Activated B cell treated with CpG ODN at 0.5 μM for 24 hours (primary cell): ENCODE measurements at regions of chr16 and their contacts with region 1.

Region 1: GRCh38 chr16:2905431-2906387 is 6.0 kb upstream of the FLYWCH1 start:
- DNase-seq: peak; percentile 82
- ATAC-seq: peak; percentile 80
- H3K4me3 Mint-ChIP-seq: peak overlapping the region; percentile 91
- H3K27ac Mint-ChIP-seq: peak overlapping the region; percentile 41
- H3K4me1 Mint-ChIP-seq: peaks cover 27% of the 10 kb centered on the region
- H3K27me3 Mint-ChIP-seq: no peaks in the 10 kb centered on the region
- CTCF ChIP-seq: no peak

Region 2: DNA sequence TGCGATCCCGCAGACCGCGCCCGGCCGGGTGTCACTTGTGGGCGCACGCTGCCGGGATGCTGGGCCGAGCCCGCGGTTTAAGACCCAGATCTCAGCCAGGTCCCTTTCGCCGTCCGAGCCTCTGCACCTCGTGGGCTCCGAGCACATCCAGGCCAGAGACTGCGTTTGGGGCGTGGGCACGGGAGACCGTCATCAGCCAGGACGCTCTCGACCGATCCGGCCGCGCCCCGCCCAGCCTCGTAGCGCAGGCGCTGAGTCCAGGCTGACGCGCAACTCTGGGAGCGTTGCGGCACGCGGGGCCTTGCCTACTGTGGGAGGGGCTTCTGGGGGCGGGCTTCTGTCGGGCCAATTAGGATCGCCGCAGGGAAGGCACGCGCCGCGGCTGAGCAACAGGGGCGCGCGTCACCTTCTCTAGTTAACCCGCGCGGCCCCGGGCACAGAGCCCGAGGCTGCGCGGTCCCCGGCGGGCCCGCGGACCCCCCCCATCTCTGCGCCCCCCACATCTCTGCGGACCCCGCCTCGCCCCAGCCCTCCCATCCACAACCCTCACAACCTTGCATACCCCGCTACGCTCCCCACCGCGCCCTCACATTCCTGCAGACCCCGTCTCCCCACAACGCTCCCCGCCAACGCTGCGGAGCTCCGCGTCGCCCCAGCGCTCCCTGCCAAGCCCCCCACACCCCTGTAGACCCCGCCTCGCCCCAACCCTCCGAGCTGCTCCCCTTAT is 373.8 kb before region 1 on chr16:
- CTCF ChIA-PET with region 1: no interaction called
- POLR2A ChIA-PET with region 1: no interaction called
- intact Hi-C with region 1: loop called (anchors 10 kb)
- DNase-seq: peak; percentile 97
- ATAC-seq: peak; percentile 94
- H3K4me3 Mint-ChIP-seq: peak overlapping the region; percentile 97
- H3K27ac Mint-ChIP-seq: peak overlapping the region; percentile 96
- H3K4me1 Mint-ChIP-seq: peaks cover 23% of the 10 kb centered on the region
- H3K27me3 Mint-ChIP-seq: no peaks in the 10 kb centered on the region
- CTCF ChIP-seq: no peak

Region 3: GRCh38 chr16:2874912-2875362 is 30.8 kb before region 1 on chr16:
- CTCF ChIA-PET with region 1: interaction called, 15 read pairs
- POLR2A ChIA-PET with region 1: no interaction called
- intact Hi-C with region 1: loop called (anchors 1 kb)
- DNase-seq: peak; percentile 51
- ATAC-seq: peak; percentile 100
- H3K4me3 Mint-ChIP-seq: no peak overlapping the region
- H3K27ac Mint-ChIP-seq: no peak overlapping the region
- H3K4me1 Mint-ChIP-seq: no peaks in the 10 kb centered on the region
- H3K27me3 Mint-ChIP-seq: peaks cover 1% of the 10 kb centered on the region
- CTCF ChIP-seq: peak; percentile 54

Region 4: GRCh38 chr16:2919511-2920255 is 14.0 kb after region 1 on chr16:
- CTCF ChIA-PET with region 1: interaction called, 4 read pairs
- POLR2A ChIA-PET with region 1: interaction called, 4 read pairs
- intact Hi-C with region 1: loop called (anchors 2 kb)
- DNase-seq: no peak
- ATAC-seq: peak; percentile 80
- H3K4me3 Mint-ChIP-seq: no peak overlapping the region
- H3K27ac Mint-ChIP-seq: no peak overlapping the region
- H3K4me1 Mint-ChIP-seq: peaks cover 4% of the 10 kb centered on the region
- H3K27me3 Mint-ChIP-seq: no peaks in the 10 kb centered on the region
- CTCF ChIP-seq: peak; percentile 89

Region 5: DNA sequence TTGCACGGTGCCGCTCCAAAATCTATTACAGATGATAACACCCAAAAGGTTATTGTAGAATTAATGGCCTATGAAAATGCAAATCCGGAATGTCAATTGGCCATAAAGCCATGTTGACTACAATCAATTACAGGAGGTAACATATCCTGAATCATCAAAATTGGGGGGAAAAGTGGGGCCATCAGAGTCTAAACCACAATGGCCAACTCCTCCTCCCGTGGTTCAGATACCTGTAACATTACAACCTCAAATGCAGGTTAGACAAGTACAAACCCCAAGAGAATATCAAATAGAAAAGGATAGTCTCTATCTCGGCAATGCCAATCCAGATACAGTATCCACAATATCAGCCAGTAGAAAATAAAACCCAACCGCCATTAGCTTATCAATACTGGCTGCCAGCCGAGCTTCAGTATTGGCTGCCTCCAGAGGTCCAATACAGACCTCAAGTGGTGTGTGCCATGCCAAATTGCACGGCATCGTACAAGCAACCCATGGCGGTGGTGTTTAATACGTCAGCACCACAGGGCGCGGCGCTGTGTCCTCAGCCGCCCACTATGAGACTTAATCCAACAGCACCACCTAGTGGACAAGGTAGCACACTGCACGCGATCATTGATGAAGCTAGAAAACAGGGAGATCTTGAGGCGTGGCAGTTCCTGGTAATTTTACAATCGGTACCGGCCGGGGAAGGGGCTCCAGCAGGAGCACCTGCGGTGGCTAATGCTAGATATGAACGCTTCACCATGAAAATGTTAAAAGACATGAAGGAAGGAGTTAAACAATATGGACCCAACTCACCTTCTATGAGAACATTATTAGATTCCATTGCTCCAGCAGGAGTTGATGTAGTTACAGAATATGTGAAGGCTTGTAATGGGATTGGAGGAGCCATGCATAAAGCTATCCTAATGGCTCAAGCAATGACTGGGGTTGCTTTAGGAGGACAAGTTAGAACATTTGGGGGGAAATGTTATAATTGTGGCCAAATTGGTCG is 21.2 kb after region 1 on chr16:
- CTCF ChIA-PET with region 1: interaction called, 5 read pairs
- POLR2A ChIA-PET with region 1: interaction called, 4 read pairs
- intact Hi-C with region 1: loop called (anchors 2 kb)
- DNase-seq: peak; percentile 67
- ATAC-seq: peak; percentile 100
- H3K4me3 Mint-ChIP-seq: no peak overlapping the region
- H3K27ac Mint-ChIP-seq: no peak overlapping the region
- H3K4me1 Mint-ChIP-seq: peaks cover 10% of the 10 kb centered on the region
- H3K27me3 Mint-ChIP-seq: no peaks in the 10 kb centered on the region
- CTCF ChIP-seq: peak; percentile 56